Mammary epithelial cell (primary cell): ENCODE measurements at regions of chr14 and their contacts with region 1.

Region 1: GRCh38 chr14:91219517-91220389 is 24.8 kb downstream of the GPR68 start:
- DNase-seq: no peak
- H3K4me3 ChIP-seq: no peak overlapping the region
- H3K27ac ChIP-seq: no peak overlapping the region
- H3K4me1 ChIP-seq: peaks cover 11% of the 10 kb centered on the region
- H3K27me3 ChIP-seq: no peaks in the 10 kb centered on the region
- CTCF ChIP-seq: no peak

Region 2: GRCh38 chr14:91149479-91149921 is 70.3 kb before region 1 on chr14:
- CTCF ChIA-PET with region 1: no interaction called
- dilution Hi-C with region 1: loop called (anchors 5 kb)
- in situ Hi-C with region 1: no loop called
- intact Hi-C with region 1: no loop called
- DNase-seq: peak; percentile 98
- H3K4me3 ChIP-seq: no peak overlapping the region
- H3K27ac ChIP-seq: peak overlapping the region; percentile 42
- H3K4me1 ChIP-seq: peaks cover 12% of the 10 kb centered on the region
- H3K27me3 ChIP-seq: no peaks in the 10 kb centered on the region
- CTCF ChIP-seq: no peak

Region 3: DNA sequence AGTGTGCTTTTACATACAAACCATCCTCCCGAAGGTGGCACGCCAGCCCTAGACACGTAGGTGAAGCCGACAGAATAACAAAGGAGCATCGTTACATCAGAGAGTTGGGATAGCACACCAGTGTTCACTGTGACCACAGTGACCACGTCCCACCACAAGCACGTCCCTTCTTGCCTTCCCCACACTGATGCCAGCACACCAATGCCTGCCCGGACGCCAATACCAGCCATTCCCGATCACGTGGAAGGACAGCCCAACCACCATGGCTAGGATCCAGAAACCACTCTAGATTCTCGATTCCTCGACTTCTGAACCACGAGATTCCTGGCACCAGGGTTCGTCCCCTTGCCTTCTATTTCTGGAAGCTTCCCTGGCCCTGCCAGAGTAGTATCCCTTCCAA is 72.7 kb after region 1 on chr14:
- CTCF ChIA-PET with region 1: no interaction called
- dilution Hi-C with region 1: loop called (anchors 5 kb)
- in situ Hi-C with region 1: no loop called
- intact Hi-C with region 1: no loop called
- DNase-seq: peak; percentile 91
- H3K4me3 ChIP-seq: no peak overlapping the region
- H3K27ac ChIP-seq: no peak overlapping the region
- H3K4me1 ChIP-seq: peaks cover 15% of the 10 kb centered on the region
- H3K27me3 ChIP-seq: peaks cover 7% of the 10 kb centered on the region
- CTCF ChIP-seq: no peak

Region 4: GRCh38 chr14:91373591-91374254 is 154.0 kb after region 1 on chr14:
- CTCF ChIA-PET with region 1: no interaction called
- dilution Hi-C with region 1: loop called (anchors 10 kb)
- in situ Hi-C with region 1: no loop called
- intact Hi-C with region 1: no loop called
- DNase-seq: no peak
- H3K4me3 ChIP-seq: no peak overlapping the region
- H3K27ac ChIP-seq: no peak overlapping the region
- H3K4me1 ChIP-seq: peaks cover 12% of the 10 kb centered on the region
- H3K27me3 ChIP-seq: no peaks in the 10 kb centered on the region
- CTCF ChIP-seq: no peak